Activated CD4-positive, alpha-beta memory T cell treated with anti-CD3 and anti-CD28 coated beads for 36 hours (primary cell): ENCODE measurements at regions of chr17 and their contacts with region 1.

Region 1: DNA sequence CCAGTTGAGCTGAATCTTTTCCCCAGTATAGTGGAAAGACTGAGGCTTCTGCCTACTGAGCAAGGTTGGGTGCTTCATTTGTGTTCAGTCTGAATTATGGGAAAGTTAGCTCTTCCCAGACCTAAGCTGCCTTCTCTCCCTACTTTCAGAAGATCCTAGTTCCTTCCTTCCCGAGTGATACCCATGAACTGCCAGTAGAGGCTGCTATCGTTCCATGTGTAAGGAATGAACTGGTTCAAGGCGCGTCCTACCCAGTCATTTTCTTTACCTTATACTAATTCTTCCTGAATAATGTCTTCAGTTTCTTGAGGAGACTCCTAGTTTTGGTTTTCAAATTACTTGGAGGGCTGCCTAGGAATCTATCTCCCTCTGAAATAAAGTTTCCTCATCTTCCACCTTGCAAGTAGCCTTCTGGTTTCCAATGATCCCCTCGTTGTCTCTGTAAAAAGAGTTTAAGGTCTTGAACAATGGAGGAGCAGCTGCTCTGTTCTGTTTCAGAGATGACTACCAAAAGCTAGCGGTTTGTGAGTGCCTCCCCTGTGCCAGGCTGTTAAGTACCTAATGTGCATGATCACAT is 934 bp upstream of the AOC2 start:
- DNase-seq: peak; percentile 17
- H3K4me3 Mint-ChIP-seq: no peak overlapping the region
- H3K27ac Mint-ChIP-seq: no peak overlapping the region
- H3K4me1 Mint-ChIP-seq: peaks cover 16% of the 10 kb centered on the region
- H3K27me3 Mint-ChIP-seq: no peaks in the 10 kb centered on the region

Region 2: GRCh38 chr17:42832974-42833766 is 10.3 kb before region 1 on chr17 and contains the start of gene PSME3:
- CTCF ChIA-PET with region 1: interaction called, 6 read pairs
- POLR2A ChIA-PET with region 1: interaction called, 12 read pairs
- intact Hi-C with region 1: no loop called
- DNase-seq: peak; percentile 93
- H3K4me3 Mint-ChIP-seq: peak within 1 kb of the TSS; percentile 97
- H3K27ac Mint-ChIP-seq: peak within 1 kb of the TSS; percentile 98
- H3K4me1 Mint-ChIP-seq: peaks cover 30% of the 10 kb centered on the region
- H3K27me3 Mint-ChIP-seq: no peaks in the 10 kb centered on the region
- total RNA-seq, gene PSME3: 111 to 116 TPM

Region 3: GRCh38 chr17:42928714-42929496 is 85.5 kb after region 1 on chr17:
- CTCF ChIA-PET with region 1: interaction called, 6 read pairs
- POLR2A ChIA-PET with region 1: no interaction called
- intact Hi-C with region 1: loop called (anchors 2 kb)
- DNase-seq: peak; percentile 57
- H3K4me3 Mint-ChIP-seq: no peak overlapping the region
- H3K27ac Mint-ChIP-seq: peak overlapping the region; percentile 47
- H3K4me1 Mint-ChIP-seq: peaks cover 8% of the 10 kb centered on the region
- H3K27me3 Mint-ChIP-seq: peaks cover 2% of the 10 kb centered on the region

Region 4: GRCh38 chr17:42980398-42981397 is 137.3 kb after region 1 on chr17 and contains the start of gene RUNDC1:
- CTCF ChIA-PET with region 1: interaction called, 5 read pairs
- POLR2A ChIA-PET with region 1: interaction called, 3 read pairs
- intact Hi-C with region 1: loop called (anchors 5 kb)
- DNase-seq: peak; percentile 94
- H3K4me3 Mint-ChIP-seq: peak within 1 kb of the TSS; percentile 99
- H3K27ac Mint-ChIP-seq: peak within 1 kb of the TSS; percentile 88
- H3K4me1 Mint-ChIP-seq: peaks cover 28% of the 10 kb centered on the region
- H3K27me3 Mint-ChIP-seq: no peaks in the 10 kb centered on the region
- total RNA-seq, gene RUNDC1: 10.0 to 11.5 TPM